ENCODE measurements at regions of chr20 and their contacts with region 1.

Region 1: DNA sequence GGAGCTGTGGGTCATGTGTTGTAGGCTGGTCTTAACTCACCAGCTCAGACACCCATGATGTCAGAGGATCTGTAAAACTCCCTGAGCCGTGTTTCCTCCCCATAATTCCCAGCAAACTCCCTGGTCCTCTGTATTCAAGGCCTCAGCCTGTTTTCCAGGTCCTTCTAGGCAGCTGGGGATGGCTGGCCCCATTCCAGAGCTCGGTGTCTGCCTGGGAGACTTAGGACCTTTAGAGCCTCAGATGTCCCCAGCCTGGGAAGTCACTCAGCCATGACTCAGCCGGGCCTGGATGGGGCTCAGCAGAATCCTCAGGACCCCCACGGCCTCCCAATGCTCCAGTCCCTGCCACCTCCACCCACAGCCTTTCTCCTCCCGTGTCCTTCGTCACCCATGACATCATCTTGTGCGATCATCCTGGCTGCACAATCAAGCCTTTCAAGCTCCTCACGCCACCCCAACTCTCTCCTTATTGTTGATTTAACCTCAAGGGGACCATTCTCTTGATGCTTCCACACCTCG is 475.1 kb upstream of the SULF2 start:
- DNase-seq: no peak

Region 2: DNA sequence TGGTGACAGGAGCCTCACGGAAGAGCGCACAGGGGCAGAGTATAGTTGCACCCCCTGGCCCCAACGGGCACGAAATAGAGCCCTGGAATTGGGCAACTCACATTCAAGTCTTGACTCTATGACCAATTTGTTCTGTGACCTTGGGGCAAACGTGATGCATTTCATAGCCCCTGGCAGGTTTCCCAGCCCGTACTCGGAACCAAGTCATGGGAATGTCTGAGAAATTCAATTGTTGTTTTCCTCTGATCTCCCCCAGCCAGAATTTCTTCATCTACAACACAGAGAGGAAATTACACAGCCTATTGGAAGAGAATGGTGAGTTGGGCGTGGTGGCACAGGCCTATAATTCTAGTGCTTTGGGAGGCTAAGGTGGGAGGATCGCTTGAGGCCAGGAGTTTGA is 152.8 kb before region 1 on chr20:
- intact Hi-C with region 1: no loop called
- DNase-seq: no peak

Region 3: GRCh38 chr20:48215291-48215928 is 44.9 kb before region 1 on chr20:
- intact Hi-C with region 1: no loop called
- DNase-seq: no peak

Region 4: GRCh38 chr20:48246497-48247350 is 13.6 kb before region 1 on chr20:
- intact Hi-C with region 1: loop called (anchors 1 kb)
- DNase-seq: no peak

Measured in cardiac septum (tissue), 1 donor.